OCI-LY7 (cell line): ENCODE measurements at regions of chr1 and their contacts with region 1.

Region 1: GRCh38 chr1:17236779-17237560 is 11.9 kb upstream of the PADI3 start:
- DNase-seq: peak; percentile 83
- H3K4me3 ChIP-seq: no peak overlapping the region
- H3K27ac ChIP-seq: no peak overlapping the region
- H3K4me1 ChIP-seq: no peaks in the 10 kb centered on the region
- CTCF ChIP-seq: peak; percentile 88

Region 2: GRCh38 chr1:17059739-17060460 is 177.1 kb before region 1 on chr1:
- CTCF ChIA-PET with region 1: no interaction called
- POLR2A ChIA-PET with region 1: no interaction called
- intact Hi-C with region 1: loop called (anchors 1 kb)
- DNase-seq: peak; percentile 76
- H3K4me3 ChIP-seq: peak overlapping the region; percentile 29
- H3K27ac ChIP-seq: no peak overlapping the region
- H3K4me1 ChIP-seq: peaks cover 16% of the 10 kb centered on the region
- CTCF ChIP-seq: peak; percentile 87

Region 3: DNA sequence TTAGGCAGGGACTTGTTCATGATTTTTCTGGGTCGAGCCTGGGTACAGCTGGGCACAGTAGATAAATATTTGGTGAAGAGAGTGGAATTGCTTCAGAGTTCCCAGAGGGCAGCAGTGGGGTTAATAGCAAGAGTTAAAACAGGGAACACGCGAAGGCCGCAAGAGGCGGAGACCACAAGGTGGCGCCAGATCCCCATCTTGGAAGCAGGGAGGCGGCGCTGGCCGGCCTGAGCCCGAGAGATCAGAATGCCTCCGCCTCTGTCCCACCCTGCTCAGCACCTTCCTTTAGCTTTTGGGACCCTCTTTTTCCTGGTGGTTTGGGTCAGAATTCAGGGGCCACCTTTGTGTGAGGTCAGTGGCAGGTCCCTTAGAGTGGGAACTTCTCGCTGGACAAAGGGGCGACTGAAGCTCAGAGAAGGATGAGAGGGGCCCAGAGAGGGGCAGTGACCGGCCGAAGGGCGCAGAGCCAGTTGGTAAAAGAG is 111.2 kb before region 1 on chr1:
- CTCF ChIA-PET with region 1: no interaction called
- POLR2A ChIA-PET with region 1: interaction called, 4 read pairs
- intact Hi-C with region 1: loop called (anchors 1 kb)
- DNase-seq: peak; percentile 76
- H3K4me3 ChIP-seq: no peak overlapping the region
- H3K27ac ChIP-seq: no peak overlapping the region
- H3K4me1 ChIP-seq: peaks cover 5% of the 10 kb centered on the region
- CTCF ChIP-seq: peak; percentile 92

Region 4: DNA sequence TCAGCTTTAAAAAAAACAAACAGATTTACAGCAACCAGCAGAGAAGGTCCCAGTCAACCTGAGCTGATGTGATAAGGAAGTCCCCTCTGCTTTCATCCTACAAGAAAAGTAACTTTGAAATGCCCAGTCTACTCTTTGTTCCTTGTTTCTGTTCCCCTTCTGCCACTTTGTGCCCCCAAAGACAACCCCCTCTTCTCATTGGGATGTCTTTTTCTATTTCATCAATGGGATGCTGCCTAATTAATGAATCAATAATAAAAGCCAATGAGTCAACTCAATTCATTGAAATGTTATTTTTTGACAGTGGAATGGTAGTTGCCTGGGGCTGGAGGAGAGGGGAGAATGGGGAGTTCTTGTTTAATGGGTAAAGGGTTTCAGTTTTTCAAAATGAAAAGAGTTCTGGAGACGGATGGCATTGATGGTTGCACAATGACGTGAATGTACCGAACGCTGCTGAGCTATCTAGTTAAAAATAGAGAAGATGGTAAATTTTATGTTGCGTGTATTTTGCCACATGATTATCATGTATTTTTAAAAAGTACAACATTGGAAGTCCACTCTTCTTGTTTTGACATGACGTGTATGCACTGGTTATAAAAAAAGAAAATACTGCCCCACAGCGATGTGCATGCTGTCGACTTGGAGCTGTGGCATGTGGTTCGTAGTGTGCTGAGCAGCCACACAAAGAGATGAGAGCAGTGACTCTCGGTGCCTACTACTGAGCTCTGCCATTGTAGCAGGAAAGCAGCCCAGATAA is 95.4 kb before region 1 on chr1:
- CTCF ChIA-PET with region 1: interaction called, 3 read pairs
- POLR2A ChIA-PET with region 1: interaction called, 3 read pairs
- intact Hi-C with region 1: loop called (anchors 5 kb)
- DNase-seq: peak; percentile 35
- H3K4me3 ChIP-seq: peak overlapping the region; percentile 15
- H3K27ac ChIP-seq: peak overlapping the region; percentile 22
- H3K4me1 ChIP-seq: peaks cover 16% of the 10 kb centered on the region
- CTCF ChIP-seq: no peak